Uterus (tissue), 4 donors: ENCODE measurements at regions of chr21 and their contacts with region 1.

Region 1: DNA sequence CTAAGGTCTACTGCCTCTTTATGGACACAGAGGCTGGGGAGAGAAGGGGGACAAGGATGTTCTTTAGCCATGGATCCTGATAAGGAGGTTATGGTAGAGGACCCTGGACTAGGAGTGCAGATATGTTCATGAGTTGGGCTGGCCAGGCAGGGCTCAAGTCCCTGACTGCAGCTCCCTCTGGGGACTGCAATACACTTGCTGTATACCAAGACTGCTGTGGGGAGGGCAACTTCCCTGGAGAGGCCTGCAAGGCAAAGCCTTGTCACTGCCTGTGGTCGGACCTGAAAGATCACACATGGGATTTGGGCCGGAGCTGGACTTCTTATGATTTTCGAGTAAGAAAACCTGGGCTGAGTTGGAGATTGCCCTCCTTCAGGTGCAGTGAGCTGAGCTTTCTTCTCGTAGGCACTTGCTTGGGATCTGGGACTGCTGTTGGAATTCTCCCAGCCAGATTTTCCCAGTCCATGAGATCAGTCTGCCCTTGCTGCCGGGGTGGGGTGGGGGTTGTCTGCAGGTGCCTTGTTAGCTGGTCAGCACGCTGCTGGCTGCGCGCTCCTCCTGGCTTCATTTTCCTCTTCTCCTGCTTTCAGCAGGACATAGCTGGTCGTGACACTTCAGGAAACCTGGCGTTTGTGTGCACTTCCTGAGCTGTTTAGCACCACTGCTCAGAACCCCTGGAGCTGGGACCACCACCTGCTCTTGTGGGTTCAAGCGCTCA is 49.0 kb upstream of the KCNJ6 start:
- DNase-seq: no peak
- H3K4me3 ChIP-seq: no peak overlapping the region
- H3K27ac ChIP-seq: no peak overlapping the region
- H3K4me1 ChIP-seq: no peaks in the 10 kb centered on the region
- H3K27me3 ChIP-seq: no peaks in the 10 kb centered on the region
- CTCF ChIP-seq: no peak
- POLR2A ChIP-seq: no peak

Region 2: DNA sequence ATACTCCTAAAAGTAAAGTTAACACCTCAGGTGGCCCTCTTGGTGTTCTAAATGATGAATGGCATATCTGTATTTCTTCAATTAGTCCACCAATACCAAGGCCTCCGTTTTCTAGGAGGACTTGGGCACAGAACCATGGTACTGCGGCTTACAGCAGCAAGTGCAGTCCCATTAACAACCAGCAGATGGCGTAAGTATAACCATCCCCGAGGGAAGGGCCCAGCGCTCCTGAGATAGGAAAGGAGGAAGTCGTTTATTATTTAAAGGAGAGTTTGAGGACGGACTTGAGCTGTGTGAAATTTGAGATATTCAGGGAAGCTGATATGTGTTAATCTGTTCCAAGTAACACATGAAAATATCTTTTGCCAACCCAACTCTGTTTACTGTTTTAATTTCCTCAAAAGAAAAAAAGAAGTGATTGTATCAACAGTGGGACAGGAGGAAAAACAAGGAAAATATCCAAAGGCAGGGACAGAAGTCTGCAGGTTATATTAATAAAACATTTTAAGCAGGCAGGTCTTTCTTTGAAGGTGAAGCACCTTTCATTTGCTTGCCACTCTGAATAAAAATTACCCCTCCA is 253.9 kb after region 1 on chr21:
- intact Hi-C with region 1: loop called (anchors 10 kb)
- DNase-seq: peak; percentile 40 to 62
- H3K4me3 ChIP-seq: no peak overlapping the region
- H3K27ac ChIP-seq: no peak overlapping the region
- H3K4me1 ChIP-seq: no peaks in the 10 kb centered on the region
- H3K27me3 ChIP-seq: no peaks in the 10 kb centered on the region
- CTCF ChIP-seq: peak; percentile 79 to 90 (median 82)
- POLR2A ChIP-seq: no peak